A549 (cell line): ENCODE measurements at regions of chr19 and their contacts with region 1.

Region 1: DNA sequence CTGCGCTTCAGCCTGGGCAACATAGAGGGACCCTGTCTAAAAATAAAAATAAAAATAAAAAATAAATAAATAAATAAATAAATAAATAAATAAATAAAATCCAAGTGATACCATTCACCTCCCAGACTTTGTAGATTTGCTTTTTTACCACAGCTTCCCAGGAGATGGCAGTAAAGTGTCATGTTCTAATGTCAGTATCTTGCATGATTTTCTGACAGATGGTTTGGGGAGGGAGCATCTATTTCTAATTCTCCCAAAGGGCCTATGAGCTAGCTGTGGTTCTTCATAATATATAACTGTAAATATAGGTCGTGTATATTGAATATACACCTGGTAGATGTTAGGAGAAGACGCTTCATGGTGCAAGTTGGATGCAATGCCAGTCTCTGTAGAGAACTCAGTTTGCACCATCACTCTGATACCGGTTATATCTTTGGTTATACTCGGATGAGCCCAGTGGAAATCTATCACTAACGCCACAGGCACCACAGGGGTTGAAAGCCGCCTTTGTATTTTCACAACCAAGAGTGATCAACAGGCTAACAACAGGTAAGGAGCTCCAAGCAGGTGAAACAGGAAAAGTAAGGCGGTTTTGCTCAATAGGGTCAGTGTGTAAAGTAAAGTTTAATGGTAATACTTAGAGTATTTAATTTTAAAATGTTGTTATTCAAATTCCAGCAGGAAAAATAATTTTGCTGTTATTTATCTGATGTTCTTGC is 13.9 kb downstream of the APLP1 start:
- DNase-seq: peak; percentile 87 to 91
- ATAC-seq: peak; percentile 55 to 56; a peak in 4 of 6 replicates
- H3K4me3 ChIP-seq: no peak overlapping the region
- H3K27ac ChIP-seq: no peak overlapping the region
- H3K4me1 ChIP-seq: peaks cover 7% of the 10 kb centered on the region
- CTCF ChIP-seq: peak; percentile 98
- EP300 ChIP-seq: no peak
- POLR2A ChIP-seq: no peak
- RAD21 ChIP-seq: peak; percentile 96 to 97

Region 2: GRCh38 chr19:35869327-35870123 is 12.7 kb before region 1 on chr19:
- CTCF ChIA-PET with region 1: interaction called, 40 read pairs
- POLR2A ChIA-PET with region 1: interaction called, 12 read pairs
- DNase-seq: peak; percentile 94 to 98
- ATAC-seq: peak; percentile 70 to 88
- H3K4me3 ChIP-seq: peak overlapping the region; percentile 59
- H3K27ac ChIP-seq: peak overlapping the region; percentile 53 to 80
- H3K4me1 ChIP-seq: peaks cover 19% of the 10 kb centered on the region
- CTCF ChIP-seq: no peak
- EP300 ChIP-seq: no peak
- POLR2A ChIP-seq: peak; percentile 30; the same call in 1 of the 2 replicates
- RAD21 ChIP-seq: no peak

Region 3: GRCh38 chr19:35899547-35900214 is 17.4 kb after region 1 on chr19:
- CTCF ChIA-PET with region 1: interaction called, 125 read pairs
- POLR2A ChIA-PET with region 1: interaction called, 3 read pairs
- DNase-seq: peak; percentile 93 to 98
- ATAC-seq: peak; percentile 85 to 88
- H3K4me3 ChIP-seq: peak overlapping the region; percentile 84
- H3K27ac ChIP-seq: peak overlapping the region; percentile 80 to 89
- H3K4me1 ChIP-seq: peaks cover 26% of the 10 kb centered on the region
- CTCF ChIP-seq: no peak
- EP300 ChIP-seq: no peak; a peak in 1 of 5 replicates
- POLR2A ChIP-seq: peak; percentile 77
- RAD21 ChIP-seq: no peak

Region 4: DNA sequence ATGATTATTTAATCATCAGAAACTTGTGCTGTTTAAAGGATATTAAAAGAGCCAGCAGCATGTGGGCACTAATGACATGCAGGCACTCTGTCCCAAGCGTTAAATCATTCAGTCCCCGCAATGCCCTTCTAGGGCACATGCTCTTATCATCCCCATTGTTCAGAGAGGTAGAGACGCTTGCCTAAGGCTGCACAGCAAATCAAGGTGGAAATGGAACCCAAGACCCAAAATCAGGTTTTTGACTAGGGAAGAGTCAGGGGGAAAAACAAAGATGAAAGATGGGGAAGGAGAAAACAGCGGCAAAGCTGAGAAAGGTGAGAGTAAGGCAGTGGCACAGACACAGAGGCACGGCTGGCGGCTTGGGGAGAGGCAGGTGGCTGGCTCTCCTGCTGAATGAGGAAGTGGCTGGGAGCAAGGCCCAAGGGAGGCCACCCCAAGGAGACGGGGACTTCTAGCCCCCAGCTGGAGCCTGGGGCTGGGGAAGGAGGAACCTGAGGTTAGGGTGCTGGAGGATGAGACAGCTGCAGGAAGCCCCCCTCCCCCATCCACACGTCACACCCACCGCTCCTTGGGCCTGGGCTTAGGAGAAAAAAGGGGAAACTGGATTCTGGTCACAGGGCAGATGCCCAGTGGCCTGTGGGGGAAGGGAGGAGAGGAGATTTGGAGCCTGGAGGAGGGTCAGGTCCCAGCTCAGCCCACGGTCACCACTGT is 26.9 kb after region 1 on chr19:
- CTCF ChIA-PET with region 1: interaction called, 32 read pairs
- POLR2A ChIA-PET with region 1: no interaction called
- DNase-seq: no peak
- ATAC-seq: 0 out of 6 replicates have a peak, but pooled peaks of 1 of the 2 experiments have one; percentile 19
- H3K4me3 ChIP-seq: no peak overlapping the region
- H3K27ac ChIP-seq: no peak overlapping the region
- H3K4me1 ChIP-seq: peaks cover 8% of the 10 kb centered on the region; the same call in 2 of the 3 replicates
- CTCF ChIP-seq: no peak
- EP300 ChIP-seq: no peak
- POLR2A ChIP-seq: no peak
- RAD21 ChIP-seq: no peak

Region 5: DNA sequence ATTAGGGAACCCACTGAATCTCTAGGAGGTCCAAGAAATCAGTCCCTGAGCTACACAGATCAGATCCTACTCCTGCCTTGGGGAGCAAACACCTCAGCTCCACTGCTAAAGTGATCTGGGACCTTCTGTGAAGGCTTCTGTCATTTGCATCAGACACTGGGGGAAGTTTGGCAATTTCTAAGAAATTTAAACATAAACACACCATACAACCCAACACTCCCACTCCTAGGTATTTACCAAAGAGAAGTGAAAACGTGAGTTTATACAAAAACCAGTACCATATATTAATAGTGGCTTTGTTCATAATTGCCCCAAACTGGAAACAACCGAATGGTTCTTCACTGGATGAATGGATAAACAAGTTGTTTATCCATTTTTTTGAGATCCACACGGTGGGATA is 33.2 kb after region 1 on chr19:
- CTCF ChIA-PET with region 1: interaction called, 402 read pairs
- POLR2A ChIA-PET with region 1: interaction called, 3 read pairs
- DNase-seq: no peak
- ATAC-seq: no peak; a peak in 1 of 6 replicates
- H3K4me3 ChIP-seq: no peak overlapping the region
- H3K27ac ChIP-seq: no peak overlapping the region
- H3K4me1 ChIP-seq: no peaks in the 10 kb centered on the region; the same call in 2 of the 3 replicates
- CTCF ChIP-seq: no peak
- EP300 ChIP-seq: no peak
- POLR2A ChIP-seq: no peak
- RAD21 ChIP-seq: no peak

Region 6: GRCh38 chr19:35937345-35938281 is 55.3 kb after region 1 on chr19:
- CTCF ChIA-PET with region 1: interaction called, 402 read pairs
- POLR2A ChIA-PET with region 1: no interaction called
- DNase-seq: no peak
- ATAC-seq: peak; percentile 7 to 23; a peak in 5 of 6 replicates
- H3K4me3 ChIP-seq: peak overlapping the region; percentile 66
- H3K27ac ChIP-seq: peak overlapping the region in 1 of 2 experiments; percentile 93; a peak in 2 of 6 replicates
- H3K4me1 ChIP-seq: peaks cover 23% of the 10 kb centered on the region
- CTCF ChIP-seq: no peak
- EP300 ChIP-seq: no peak
- POLR2A ChIP-seq: no peak
- RAD21 ChIP-seq: no peak

Region 7: GRCh38 chr19:36103626-36104552 is 221.6 kb after region 1 on chr19:
- CTCF ChIA-PET with region 1: no interaction called
- POLR2A ChIA-PET with region 1: no interaction called
- DNase-seq: peak in 1 of 2 experiments; percentile 38
- ATAC-seq: peak; percentile 3 to 7; a peak in 4 of 6 replicates
- H3K4me3 ChIP-seq: no peak overlapping the region
- H3K27ac ChIP-seq: no peak overlapping the region
- H3K4me1 ChIP-seq: peaks cover 5% of the 10 kb centered on the region; the same call in 2 of the 3 replicates
- CTCF ChIP-seq: no peak
- EP300 ChIP-seq: no peak
- POLR2A ChIP-seq: no peak
- RAD21 ChIP-seq: no peak